ENCODE measurements at regions of chr2 and their contacts with region 1.

Region 1: GRCh38 chr2:233832869-233833311 is 21.4 kb downstream of the HJURP start:
- DNase-seq: peak; percentile 30
- H3K4me3 ChIP-seq: no peak overlapping the region
- H3K27ac ChIP-seq: no peak overlapping the region
- H3K4me1 ChIP-seq: no peaks in the 10 kb centered on the region
- H3K27me3 ChIP-seq: no peaks in the 10 kb centered on the region
- CTCF ChIP-seq: peak in 1 of 2 donors; percentile 42
- POLR2A ChIP-seq: no peak

Region 2: GRCh38 chr2:233288719-233289118 is 544.2 kb before region 1 on chr2:
- CTCF ChIA-PET with region 1: no interaction called
- POLR2A ChIA-PET with region 1: no interaction called
- dilution Hi-C with region 1: no loop called
- intact Hi-C with region 1: loop called (anchors 10 kb)
- DNase-seq: no peak
- H3K4me3 ChIP-seq: no peak overlapping the region
- H3K27ac ChIP-seq: no peak overlapping the region
- H3K4me1 ChIP-seq: peaks cover 3% of the 10 kb centered on the region
- H3K27me3 ChIP-seq: no peaks in the 10 kb centered on the region
- CTCF ChIP-seq: no peak
- POLR2A ChIP-seq: no peak

Region 3: GRCh38 chr2:233643128-233643527 is 189.8 kb before region 1 on chr2:
- CTCF ChIA-PET with region 1: no interaction called
- POLR2A ChIA-PET with region 1: no interaction called
- dilution Hi-C with region 1: no loop called
- intact Hi-C with region 1: no loop called
- DNase-seq: peak; percentile 13
- H3K4me3 ChIP-seq: no peak overlapping the region
- H3K27ac ChIP-seq: no peak overlapping the region
- H3K4me1 ChIP-seq: no peaks in the 10 kb centered on the region
- H3K27me3 ChIP-seq: no peaks in the 10 kb centered on the region
- CTCF ChIP-seq: peak; percentile 6 to 35
- POLR2A ChIP-seq: no peak

Region 4: GRCh38 chr2:233745073-233745755 is 87.7 kb before region 1 on chr2:
- CTCF ChIA-PET with region 1: no interaction called
- POLR2A ChIA-PET with region 1: no interaction called
- dilution Hi-C with region 1: no loop called
- intact Hi-C with region 1: no loop called
- DNase-seq: no peak
- H3K4me3 ChIP-seq: no peak overlapping the region
- H3K27ac ChIP-seq: no peak overlapping the region
- H3K4me1 ChIP-seq: no peaks in the 10 kb centered on the region
- H3K27me3 ChIP-seq: peaks cover 0 to 2% of the 10 kb centered on the region in 2 experiments
- CTCF ChIP-seq: no peak
- POLR2A ChIP-seq: no peak

Measured in endothelial cell of umbilical vein (primary cell).